Dendritic cell treated with granulocyte-macrophage colony-stimulating factor and Interleukin-4, amounts not matched to agents 40 ng/mL and 50 ng/mL, for 4 days (primary cell): ENCODE measurements at regions of chr20 and their contacts with region 1.

Region 1: GRCh38 chr20:56422076-56422823 is 10.2 kb downstream of the CASS4 start:
- H3K4me3 Mint-ChIP-seq: no peak overlapping the region
- H3K27ac Mint-ChIP-seq: peak overlapping the region; percentile 67
- H3K4me1 Mint-ChIP-seq: peaks cover 82% of the 10 kb centered on the region
- H3K27me3 Mint-ChIP-seq: no peaks in the 10 kb centered on the region

Region 2: GRCh38 chr20:56442389-56443365 is 20.4 kb after region 1 on chr20:
- intact Hi-C with region 1: loop called (anchors 1 kb)
- H3K4me3 Mint-ChIP-seq: no peak overlapping the region
- H3K27ac Mint-ChIP-seq: peak overlapping the region; percentile 87
- H3K4me1 Mint-ChIP-seq: peaks cover 39% of the 10 kb centered on the region
- H3K27me3 Mint-ChIP-seq: no peaks in the 10 kb centered on the region

Region 3: DNA sequence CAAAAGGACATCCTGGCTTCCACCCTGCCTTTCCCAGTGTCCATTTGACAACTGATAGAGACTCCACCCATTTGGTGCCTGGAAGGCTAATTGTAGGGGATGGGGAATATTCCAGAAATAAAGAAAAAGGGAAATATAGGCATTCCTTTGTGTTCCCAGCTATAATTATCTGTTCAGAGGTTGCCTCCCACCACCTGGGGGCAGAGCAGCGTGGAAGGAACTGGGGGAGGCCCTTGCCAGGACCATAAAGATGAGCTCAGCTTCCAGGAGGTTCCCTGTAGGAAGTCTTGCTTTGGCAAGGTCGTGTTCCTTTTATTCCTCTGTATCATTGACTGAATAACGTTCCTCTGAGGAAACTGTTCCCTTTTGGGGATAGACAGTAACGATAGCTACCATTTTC is 421.6 kb after region 1 on chr20:
- intact Hi-C with region 1: no loop called
- H3K4me3 Mint-ChIP-seq: no peak overlapping the region
- H3K27ac Mint-ChIP-seq: no peak overlapping the region
- H3K4me1 Mint-ChIP-seq: no peaks in the 10 kb centered on the region
- H3K27me3 Mint-ChIP-seq: peaks cover 1% of the 10 kb centered on the region